ENCODE measurements at regions of chr2 and their contacts with region 1.

Region 1: DNA sequence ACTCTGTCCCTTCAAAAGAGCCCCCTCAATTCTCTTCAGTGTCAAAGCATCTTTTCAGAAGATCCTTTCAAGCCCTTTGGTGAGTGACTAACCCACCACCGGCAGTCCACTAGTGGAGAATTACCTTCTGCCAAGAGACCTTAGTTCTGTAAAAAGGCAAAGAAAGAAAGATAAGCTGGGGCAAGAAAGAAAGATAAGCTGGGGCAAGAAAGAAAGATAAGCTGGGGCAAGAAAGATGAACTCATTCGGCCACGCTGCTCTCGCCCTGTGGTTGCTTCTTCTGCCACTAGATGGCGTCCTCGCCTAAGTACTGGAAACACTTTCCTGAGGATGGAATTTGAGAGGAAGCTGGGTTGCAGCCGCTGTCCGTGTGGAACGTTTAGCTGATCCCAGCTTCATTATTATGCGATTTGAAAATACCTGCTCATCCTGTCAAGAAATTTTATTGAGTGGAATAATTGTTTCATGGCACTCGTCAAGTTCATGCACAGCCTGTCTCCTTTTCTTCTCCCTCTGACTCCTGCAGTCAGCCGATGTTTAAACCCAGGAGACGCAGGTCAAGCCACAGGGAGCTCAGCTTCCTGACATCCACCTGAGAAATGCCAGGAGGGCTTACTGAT is 17.3 kb upstream of the ANXA4 start:
- DNase-seq: peak; percentile 79
- H3K4me3 ChIP-seq: peak overlapping the region; percentile 54
- H3K27ac ChIP-seq: no peak overlapping the region
- H3K4me1 ChIP-seq: no peaks in the 10 kb centered on the region
- CTCF ChIP-seq: peak; percentile 91

Region 2: DNA sequence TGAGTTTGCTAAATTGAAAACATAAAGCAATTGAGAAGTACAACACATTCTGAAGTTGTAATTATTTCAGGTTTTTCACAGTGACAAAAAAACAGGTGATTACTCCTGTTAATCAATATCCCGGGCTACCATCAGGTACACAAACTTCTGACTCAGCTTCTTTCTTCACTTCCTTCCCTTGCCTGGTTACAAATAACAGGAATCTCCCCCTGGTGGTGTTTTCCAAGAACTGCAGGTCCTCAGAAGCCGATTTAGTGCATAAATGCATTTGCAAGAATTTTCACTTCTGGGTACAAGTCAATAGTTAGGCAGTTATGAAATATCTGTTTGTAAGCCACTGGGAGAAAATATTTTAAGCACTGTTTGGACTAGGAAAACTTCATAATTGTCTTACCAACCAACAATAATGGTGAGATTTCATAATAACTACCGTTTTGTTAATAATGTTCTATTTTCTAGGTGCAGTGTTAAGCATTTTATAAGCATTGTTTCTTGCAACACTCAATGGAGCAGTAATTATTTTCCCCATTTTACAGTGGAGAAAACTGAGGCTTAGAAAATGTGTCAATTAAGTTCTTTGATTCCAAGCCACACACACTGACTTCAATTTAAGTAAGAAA is 92.4 kb after region 1 on chr2:
- CTCF ChIA-PET with region 1: interaction called, 27 read pairs
- POLR2A ChIA-PET with region 1: interaction called, 33 read pairs
- intact Hi-C with region 1: loop called (anchors 1 kb)
- DNase-seq: peak; percentile 89
- H3K4me3 ChIP-seq: no peak overlapping the region
- H3K27ac ChIP-seq: no peak overlapping the region
- H3K4me1 ChIP-seq: peaks cover 3% of the 10 kb centered on the region
- CTCF ChIP-seq: peak; percentile 95

Measured in OCI-LY7 (cell line).